ENCODE measurements at regions of chr19 and their contacts with region 1.

Region 1: GRCh38 chr19:33241530-33242101 is 16.0 kb upstream of the SLC7A10 start:
- DNase-seq: no peak
- H3K4me3 ChIP-seq: no peak overlapping the region
- H3K27ac ChIP-seq: no peak overlapping the region
- H3K4me1 ChIP-seq: no peaks in the 10 kb centered on the region
- H3K27me3 ChIP-seq: no peaks in the 10 kb centered on the region
- CTCF ChIP-seq: peak; percentile 50 to 92 (median 86)
- POLR2A ChIP-seq: no peak

Region 2: GRCh38 chr19:33406521-33407139 is 165.0 kb after region 1 on chr19:
- intact Hi-C with region 1: loop called (anchors 1 kb)
- DNase-seq: peak; percentile 57
- H3K4me3 ChIP-seq: no peak overlapping the region
- H3K27ac ChIP-seq: no peak overlapping the region
- H3K4me1 ChIP-seq: no peaks in the 10 kb centered on the region
- H3K27me3 ChIP-seq: no peaks in the 10 kb centered on the region
- CTCF ChIP-seq: peak; percentile 96 to 98 (median 96)
- POLR2A ChIP-seq: no peak

Measured in prostate gland (tissue), 2 donors.